ENCODE measurements at regions of chr14 and their contacts with region 1.

Region 1: GRCh38 chr14:89493877-89494634 is 77.0 kb upstream of the FOXN3 start:
- DNase-seq: peak; percentile 88
- H3K4me3 ChIP-seq: peak overlapping the region; percentile 53
- H3K27ac ChIP-seq: peak overlapping the region; percentile 25
- H3K4me1 ChIP-seq: peaks cover 25% of the 10 kb centered on the region
- CTCF ChIP-seq: no peak

Region 2: GRCh38 chr14:89504602-89505313 is 10.7 kb after region 1 on chr14:
- CTCF ChIA-PET with region 1: interaction called, 3 read pairs
- POLR2A ChIA-PET with region 1: interaction called, 14 read pairs
- intact Hi-C with region 1: no loop called
- DNase-seq: no peak
- H3K4me3 ChIP-seq: no peak overlapping the region
- H3K27ac ChIP-seq: no peak overlapping the region
- H3K4me1 ChIP-seq: peaks cover 4% of the 10 kb centered on the region
- CTCF ChIP-seq: no peak

Region 3: GRCh38 chr14:89509891-89510290 is 15.8 kb after region 1 on chr14:
- CTCF ChIA-PET with region 1: interaction called, 7 read pairs
- POLR2A ChIA-PET with region 1: interaction called, 14 read pairs
- intact Hi-C with region 1: no loop called
- DNase-seq: no peak
- H3K4me3 ChIP-seq: no peak overlapping the region
- H3K27ac ChIP-seq: peak overlapping the region; percentile 45
- H3K4me1 ChIP-seq: peaks cover 21% of the 10 kb centered on the region
- CTCF ChIP-seq: no peak

Region 4: GRCh38 chr14:89524990-89525667 is 31.1 kb after region 1 on chr14:
- CTCF ChIA-PET with region 1: no interaction called
- POLR2A ChIA-PET with region 1: no interaction called
- intact Hi-C with region 1: no loop called
- DNase-seq: no peak
- H3K4me3 ChIP-seq: no peak overlapping the region
- H3K27ac ChIP-seq: no peak overlapping the region
- H3K4me1 ChIP-seq: no peaks in the 10 kb centered on the region
- CTCF ChIP-seq: no peak

Region 5: GRCh38 chr14:89600950-89601826 is 107.1 kb after region 1 on chr14:
- CTCF ChIA-PET with region 1: no interaction called
- POLR2A ChIA-PET with region 1: no interaction called
- intact Hi-C with region 1: no loop called
- DNase-seq: no peak
- H3K4me3 ChIP-seq: no peak overlapping the region
- H3K27ac ChIP-seq: no peak overlapping the region
- H3K4me1 ChIP-seq: no peaks in the 10 kb centered on the region
- CTCF ChIP-seq: no peak

Region 6: GRCh38 chr14:89614009-89614691 is 120.1 kb after region 1 on chr14:
- CTCF ChIA-PET with region 1: no interaction called
- POLR2A ChIA-PET with region 1: no interaction called
- intact Hi-C with region 1: no loop called
- DNase-seq: peak; percentile 29
- H3K4me3 ChIP-seq: no peak overlapping the region
- H3K27ac ChIP-seq: no peak overlapping the region
- H3K4me1 ChIP-seq: peaks cover 44% of the 10 kb centered on the region
- CTCF ChIP-seq: no peak

Region 7: GRCh38 chr14:89767861-89768268 is 273.8 kb after region 1 on chr14:
- CTCF ChIA-PET with region 1: no interaction called
- POLR2A ChIA-PET with region 1: no interaction called
- intact Hi-C with region 1: loop called (anchors 5 kb)
- DNase-seq: peak; percentile 81
- H3K4me3 ChIP-seq: no peak overlapping the region
- H3K27ac ChIP-seq: no peak overlapping the region
- H3K4me1 ChIP-seq: peaks cover 37% of the 10 kb centered on the region
- CTCF ChIP-seq: peak; percentile 94

Measured in OCI-LY7 (cell line).